Heart left ventricle (tissue), 16 donors: ENCODE measurements at regions of chr5 and their contacts with region 1.

Region 1: DNA sequence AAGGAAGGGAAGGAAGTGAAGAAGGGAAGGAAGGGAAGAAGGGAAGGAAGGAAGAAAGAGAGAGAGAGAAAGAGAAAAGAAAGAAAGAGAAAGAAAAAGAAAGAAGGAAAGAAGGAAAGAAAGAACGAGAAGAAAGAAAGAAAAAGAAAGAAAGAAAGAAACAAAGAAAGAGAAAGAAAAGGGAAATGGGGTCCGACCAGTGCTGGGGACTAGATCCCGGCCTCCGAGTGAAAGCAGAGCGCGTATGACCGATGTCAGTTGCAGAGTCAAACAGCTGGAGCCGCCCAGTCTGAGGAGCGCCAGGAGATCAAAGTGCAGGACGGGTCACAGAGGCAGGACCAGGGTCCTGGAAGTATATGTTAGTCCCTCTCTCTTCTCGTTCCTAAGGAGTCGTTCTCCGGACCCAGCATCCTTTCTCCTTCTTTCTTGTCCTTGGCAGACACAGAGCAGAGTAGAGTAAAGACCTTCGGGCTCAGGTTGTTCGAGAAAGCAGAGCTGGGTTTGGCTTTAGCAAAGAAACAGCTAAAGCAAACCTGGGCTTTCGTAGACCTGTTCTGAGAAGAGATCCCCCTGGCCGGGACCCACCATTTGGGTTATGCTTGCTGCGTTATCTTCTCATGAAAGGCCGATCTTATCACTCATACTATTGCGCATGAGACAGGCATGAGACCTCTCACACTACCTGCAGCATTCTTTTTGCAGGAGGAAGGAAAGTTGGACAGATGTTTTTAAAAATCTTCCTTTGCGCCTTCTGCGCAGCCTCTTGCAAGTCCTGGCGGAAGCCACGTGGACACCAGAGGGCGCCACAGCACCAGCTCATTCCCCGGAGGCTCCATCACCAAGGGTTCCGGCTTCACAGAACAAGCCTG is 305.2 kb upstream of the MSX2 start:
- DNase-seq: peak; percentile 80 to 90 (median 87)
- ATAC-seq: peak; percentile 69 to 97 (median 92)
- H3K4me3 ChIP-seq: peak overlapping the region in 7 of 12 donors; percentile 6 to 38 (median 25)
- H3K27ac ChIP-seq: no peak overlapping the region
- H3K4me1 ChIP-seq: peaks cover 0 to 10% (median 0%) of the 10 kb centered on the region in 12 donors
- H3K27me3 ChIP-seq: peaks cover 0 to 33% (median 11%) of the 10 kb centered on the region in 9 donors
- CTCF ChIP-seq: peak; percentile 75 to 94 (median 86)
- POLR2A ChIP-seq: no peak

Region 2: DNA sequence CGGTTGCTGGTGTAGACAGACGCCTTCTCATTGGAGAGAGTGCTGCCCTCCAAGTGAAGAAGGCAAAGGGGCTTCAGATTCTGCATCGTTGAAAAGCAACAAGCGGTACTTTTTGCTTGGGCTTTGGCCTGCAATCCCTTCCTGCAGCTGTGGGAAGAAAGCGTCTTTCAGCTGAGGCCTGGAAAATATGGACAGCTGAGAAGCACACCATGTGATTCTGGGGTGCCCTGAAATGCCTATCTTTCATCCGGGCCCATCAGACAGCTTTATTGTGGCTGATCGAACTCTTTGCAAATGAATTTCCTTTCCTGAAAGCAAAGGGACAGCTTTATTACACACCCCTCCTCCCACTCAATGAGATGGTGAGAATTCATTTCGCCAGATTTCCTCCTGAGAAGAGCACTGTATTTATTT is 299.7 kb before region 1 on chr5:
- intact Hi-C with region 1: no loop called
- DNase-seq: no peak
- ATAC-seq: no peak
- H3K4me3 ChIP-seq: no peak overlapping the region
- H3K27ac ChIP-seq: no peak overlapping the region
- H3K4me1 ChIP-seq: no peaks in the 10 kb centered on the region
- H3K27me3 ChIP-seq: no peaks in the 10 kb centered on the region
- CTCF ChIP-seq: no peak
- POLR2A ChIP-seq: no peak

Region 3: DNA sequence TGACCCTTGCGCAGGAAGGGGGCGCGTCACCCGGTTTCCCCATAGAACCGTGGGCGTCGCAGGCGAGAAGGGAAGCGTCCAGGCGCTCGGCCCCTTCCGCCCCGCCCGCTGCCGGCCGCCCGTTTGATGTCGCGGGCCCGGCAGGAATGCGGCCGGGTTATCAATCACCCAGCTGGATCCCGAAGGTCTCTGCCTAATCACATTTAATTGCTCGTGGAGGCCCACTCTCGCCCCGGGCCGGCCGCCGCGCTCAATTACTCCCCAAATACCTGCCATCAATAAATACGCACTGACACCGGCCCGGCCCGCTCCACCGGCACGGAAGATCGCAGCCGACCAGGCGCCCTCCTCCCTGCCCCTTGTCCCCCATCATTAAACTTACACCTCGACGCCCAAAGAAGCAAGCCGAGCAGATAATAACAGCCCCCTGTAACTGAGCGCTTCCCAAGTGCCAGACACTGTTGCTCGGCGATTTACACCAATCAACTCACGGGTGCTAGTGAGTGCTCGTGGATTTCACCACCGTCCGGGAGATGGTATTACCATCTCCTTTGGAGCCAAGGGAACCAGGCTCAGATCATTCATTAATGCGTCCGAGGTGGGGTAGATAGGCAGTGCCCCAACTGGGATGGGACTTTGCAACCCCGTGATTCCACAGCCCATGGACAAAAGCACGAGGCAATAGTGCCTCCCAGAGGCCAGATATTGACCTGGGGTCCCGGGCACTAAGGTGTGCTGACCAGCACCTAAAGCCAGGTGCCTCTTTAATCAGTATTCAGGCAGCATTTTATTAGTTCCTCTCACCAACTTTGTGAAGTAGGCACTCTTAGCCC is 316.6 kb after region 1 on chr5:
- intact Hi-C with region 1: loop called in 4 of 10 experiments (anchors 5 to 10 kb)
- DNase-seq: no peak
- ATAC-seq: no peak
- H3K4me3 ChIP-seq: peak overlapping the region in 2 of 12 donors; percentile 2 to 13
- H3K27ac ChIP-seq: no peak overlapping the region
- H3K4me1 ChIP-seq: peaks cover 0 to 14% (median 4%) of the 10 kb centered on the region in 12 donors
- H3K27me3 ChIP-seq: peaks cover 35 to 90% (median 66%) of the 10 kb centered on the region in 9 donors
- CTCF ChIP-seq: peak in 8 of 12 donors; percentile 14 to 41 (median 26)
- POLR2A ChIP-seq: no peak

Region 4: GRCh38 chr5:174793684-174794328 is 374.6 kb after region 1 on chr5:
- intact Hi-C with region 1: loop called (anchors 1 to 5 kb)
- DNase-seq: peak; percentile 37 to 76 (median 43)
- ATAC-seq: peak in 3 of 4 donors; percentile 57 to 88 (median 85)
- H3K4me3 ChIP-seq: no peak overlapping the region
- H3K27ac ChIP-seq: no peak overlapping the region
- H3K4me1 ChIP-seq: peaks cover 0 to 6% (median 0%) of the 10 kb centered on the region in 12 donors
- H3K27me3 ChIP-seq: peaks cover 0 to 51% (median 23%) of the 10 kb centered on the region in 9 donors
- CTCF ChIP-seq: peak; percentile 60 to 85 (median 76)
- POLR2A ChIP-seq: no peak

Region 5: DNA sequence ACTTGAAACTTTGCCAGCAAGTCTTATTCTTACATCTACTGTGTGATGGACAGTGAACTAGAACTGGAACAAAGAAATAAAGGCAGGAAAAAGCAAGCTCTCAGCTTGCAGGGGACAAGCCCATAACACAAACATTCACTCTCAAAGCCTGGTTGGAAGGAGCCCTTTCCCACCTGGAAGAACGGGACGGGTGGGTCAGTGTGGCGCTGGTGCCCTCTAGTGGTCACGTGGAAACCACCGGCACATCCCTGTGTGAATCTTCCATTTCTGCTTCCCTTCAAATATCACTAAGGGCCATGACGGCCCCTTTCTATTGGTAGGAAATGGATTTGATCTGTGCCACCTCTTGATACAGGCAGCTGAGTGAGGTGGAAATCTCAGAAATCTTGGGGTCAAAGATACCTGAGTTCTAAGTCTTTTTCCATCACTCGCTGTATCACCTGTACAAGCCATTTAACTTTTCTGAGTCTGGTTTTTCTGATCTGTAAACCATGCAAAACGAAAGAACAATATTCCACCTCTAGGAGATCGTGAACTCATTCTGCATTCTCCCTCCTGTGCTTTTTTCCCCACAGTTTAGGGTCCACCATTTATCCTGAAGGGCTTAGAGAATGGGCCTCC is 516.8 kb after region 1 on chr5:
- intact Hi-C with region 1: loop called (anchors 1 to 10 kb)
- DNase-seq: peak; percentile 40 to 72 (median 46)
- ATAC-seq: peak in 3 of 4 donors; percentile 72 to 80 (median 80)
- H3K4me3 ChIP-seq: no peak overlapping the region
- H3K27ac ChIP-seq: no peak overlapping the region
- H3K4me1 ChIP-seq: no peaks in the 10 kb centered on the region
- H3K27me3 ChIP-seq: peaks cover 0 to 16% (median 0%) of the 10 kb centered on the region in 9 donors
- CTCF ChIP-seq: peak; percentile 75 to 93 (median 86)
- POLR2A ChIP-seq: no peak